ENCODE measurements at regions of chr11 and their contacts with region 1.

Region 1: GRCh38 chr11:12331239-12331874 is 46.0 kb upstream of the PARVA start:
- DNase-seq: peak; percentile 82
- H3K4me3 ChIP-seq: no peak overlapping the region
- H3K27ac ChIP-seq: no peak overlapping the region
- H3K4me1 ChIP-seq: no peaks in the 10 kb centered on the region
- H3K27me3 ChIP-seq: no peaks in the 10 kb centered on the region
- CTCF ChIP-seq: peak; percentile 61 to 70
- POLR2A ChIP-seq: no peak

Region 2: GRCh38 chr11:12258451-12258850 is 72.9 kb before region 1 on chr11:
- CTCF ChIA-PET with region 1: no interaction called
- POLR2A ChIA-PET with region 1: no interaction called
- dilution Hi-C with region 1: no loop called
- intact Hi-C with region 1: no loop called
- DNase-seq: no peak
- H3K4me3 ChIP-seq: no peak overlapping the region
- H3K27ac ChIP-seq: no peak overlapping the region
- H3K4me1 ChIP-seq: no peaks in the 10 kb centered on the region
- H3K27me3 ChIP-seq: no peaks in the 10 kb centered on the region
- CTCF ChIP-seq: no peak
- POLR2A ChIP-seq: no peak

Region 3: DNA sequence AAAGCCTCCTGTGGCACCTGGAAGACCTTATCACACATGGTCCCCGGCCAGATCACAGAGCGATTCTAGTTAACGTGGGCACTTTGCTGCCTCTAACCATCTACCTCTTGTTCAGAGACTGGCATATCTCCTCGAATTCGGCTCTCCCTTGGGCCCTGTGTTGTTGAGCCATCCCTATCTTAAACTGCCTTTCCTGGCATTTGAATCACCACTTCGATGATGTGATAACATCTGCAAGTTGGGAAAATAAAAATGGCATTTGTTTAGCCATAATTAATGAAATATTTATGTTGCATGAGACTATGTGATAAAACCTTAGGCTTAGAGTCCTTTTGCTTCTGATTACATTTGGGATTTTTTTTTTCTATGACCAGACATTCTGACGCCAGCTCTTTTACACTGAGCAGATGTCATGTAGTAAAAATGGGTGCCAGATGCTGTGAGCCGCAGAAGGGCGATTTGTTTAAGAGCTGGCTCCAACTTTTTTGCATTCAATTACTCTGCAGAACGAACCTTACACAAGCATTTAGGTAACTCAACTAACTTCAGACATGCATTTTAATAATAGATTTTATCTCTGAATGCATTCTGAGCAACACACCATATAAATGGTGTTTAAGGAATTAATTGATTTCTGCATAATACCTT is 12.4 kb before region 1 on chr11:
- CTCF ChIA-PET with region 1: interaction called, 32 read pairs
- POLR2A ChIA-PET with region 1: no interaction called
- dilution Hi-C with region 1: no loop called
- intact Hi-C with region 1: no loop called
- DNase-seq: no peak
- H3K4me3 ChIP-seq: no peak overlapping the region
- H3K27ac ChIP-seq: no peak overlapping the region
- H3K4me1 ChIP-seq: no peaks in the 10 kb centered on the region
- H3K27me3 ChIP-seq: no peaks in the 10 kb centered on the region
- CTCF ChIP-seq: no peak
- POLR2A ChIP-seq: no peak

Region 4: GRCh38 chr11:12469451-12469850 is 138.1 kb after region 1 on chr11:
- CTCF ChIA-PET with region 1: interaction called, 10 read pairs
- POLR2A ChIA-PET with region 1: no interaction called
- dilution Hi-C with region 1: no loop called
- intact Hi-C with region 1: no loop called
- DNase-seq: peak; percentile 65
- H3K4me3 ChIP-seq: no peak overlapping the region
- H3K27ac ChIP-seq: no peak overlapping the region
- H3K4me1 ChIP-seq: peaks cover 13% of the 10 kb centered on the region
- H3K27me3 ChIP-seq: no peaks in the 10 kb centered on the region
- CTCF ChIP-seq: no peak
- POLR2A ChIP-seq: no peak

Region 5: GRCh38 chr11:12599408-12600143 is 268.2 kb after region 1 on chr11:
- CTCF ChIA-PET with region 1: interaction called, 14 read pairs
- POLR2A ChIA-PET with region 1: no interaction called
- dilution Hi-C with region 1: no loop called
- intact Hi-C with region 1: loop called (anchors 2 kb)
- DNase-seq: peak; percentile 18
- H3K4me3 ChIP-seq: no peak overlapping the region
- H3K27ac ChIP-seq: no peak overlapping the region
- H3K4me1 ChIP-seq: peaks cover 7% of the 10 kb centered on the region
- H3K27me3 ChIP-seq: no peaks in the 10 kb centered on the region
- CTCF ChIP-seq: peak; percentile 76 to 77
- POLR2A ChIP-seq: no peak

Region 6: DNA sequence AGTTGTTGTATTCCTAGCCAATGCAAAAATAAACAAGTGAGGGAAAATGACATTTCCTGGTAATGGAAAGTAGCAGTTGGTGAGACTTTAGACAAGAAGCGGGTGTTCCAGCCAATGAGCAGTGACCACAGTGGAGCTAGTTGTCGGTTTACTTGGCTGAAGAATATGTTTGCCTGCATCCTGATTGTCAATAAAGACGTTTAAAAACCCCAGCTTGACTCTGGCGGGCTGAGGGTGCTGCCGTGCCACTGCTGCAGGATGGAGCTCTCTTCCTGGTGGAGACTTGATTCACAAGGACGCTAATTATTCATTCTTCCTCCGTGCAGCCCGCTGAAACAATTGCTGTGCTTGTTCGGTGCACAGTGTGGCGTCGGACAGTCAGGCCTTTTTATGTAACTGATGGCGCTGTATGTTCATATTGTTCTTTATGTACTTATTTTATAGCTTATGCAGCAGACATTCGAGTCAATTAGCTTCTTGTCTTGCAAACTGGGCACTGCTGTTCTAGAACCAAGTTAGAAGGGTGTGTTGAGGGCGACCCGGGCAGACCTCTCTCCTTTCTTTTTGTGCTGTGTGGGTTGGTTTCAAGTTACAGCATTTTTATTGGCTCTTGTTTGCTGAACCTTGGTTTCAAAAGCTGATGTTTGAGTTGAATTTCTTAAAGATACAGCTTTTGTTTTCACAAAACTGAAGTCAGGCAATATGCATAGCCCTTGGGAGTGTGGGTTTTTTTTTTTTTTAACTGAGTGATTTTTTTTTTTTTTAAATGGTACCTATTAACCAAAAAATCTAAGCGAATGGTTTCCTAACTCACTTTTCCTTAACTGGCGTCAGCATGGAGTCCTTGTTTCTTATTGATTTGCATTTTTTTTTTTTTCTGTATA is 496.8 kb after region 1 on chr11:
- CTCF ChIA-PET with region 1: interaction called, 8 read pairs
- POLR2A ChIA-PET with region 1: no interaction called
- dilution Hi-C with region 1: no loop called
- intact Hi-C with region 1: loop called (anchors 10 kb)
- DNase-seq: peak; percentile 91
- H3K4me3 ChIP-seq: peak overlapping the region; percentile 24 to 84 (median 63)
- H3K27ac ChIP-seq: peak overlapping the region; percentile 52
- H3K4me1 ChIP-seq: peaks cover 43% of the 10 kb centered on the region
- H3K27me3 ChIP-seq: no peaks in the 10 kb centered on the region
- CTCF ChIP-seq: no peak
- POLR2A ChIP-seq: peak; percentile 73

Region 7: GRCh38 chr11:12963792-12964536 is 632.6 kb after region 1 on chr11:
- CTCF ChIA-PET with region 1: interaction called, 95 read pairs
- POLR2A ChIA-PET with region 1: no interaction called
- dilution Hi-C with region 1: no loop called
- intact Hi-C with region 1: loop called (anchors 2 kb)
- DNase-seq: peak; percentile 58
- H3K4me3 ChIP-seq: no peak overlapping the region
- H3K27ac ChIP-seq: no peak overlapping the region
- H3K4me1 ChIP-seq: no peaks in the 10 kb centered on the region
- H3K27me3 ChIP-seq: peaks cover 7 to 12% of the 10 kb centered on the region in 2 experiments
- CTCF ChIP-seq: peak; percentile 78 to 81
- POLR2A ChIP-seq: no peak

Measured in endothelial cell of umbilical vein (primary cell).